ENCODE measurements at regions of chr11 and their contacts with region 1.

Region 1: DNA sequence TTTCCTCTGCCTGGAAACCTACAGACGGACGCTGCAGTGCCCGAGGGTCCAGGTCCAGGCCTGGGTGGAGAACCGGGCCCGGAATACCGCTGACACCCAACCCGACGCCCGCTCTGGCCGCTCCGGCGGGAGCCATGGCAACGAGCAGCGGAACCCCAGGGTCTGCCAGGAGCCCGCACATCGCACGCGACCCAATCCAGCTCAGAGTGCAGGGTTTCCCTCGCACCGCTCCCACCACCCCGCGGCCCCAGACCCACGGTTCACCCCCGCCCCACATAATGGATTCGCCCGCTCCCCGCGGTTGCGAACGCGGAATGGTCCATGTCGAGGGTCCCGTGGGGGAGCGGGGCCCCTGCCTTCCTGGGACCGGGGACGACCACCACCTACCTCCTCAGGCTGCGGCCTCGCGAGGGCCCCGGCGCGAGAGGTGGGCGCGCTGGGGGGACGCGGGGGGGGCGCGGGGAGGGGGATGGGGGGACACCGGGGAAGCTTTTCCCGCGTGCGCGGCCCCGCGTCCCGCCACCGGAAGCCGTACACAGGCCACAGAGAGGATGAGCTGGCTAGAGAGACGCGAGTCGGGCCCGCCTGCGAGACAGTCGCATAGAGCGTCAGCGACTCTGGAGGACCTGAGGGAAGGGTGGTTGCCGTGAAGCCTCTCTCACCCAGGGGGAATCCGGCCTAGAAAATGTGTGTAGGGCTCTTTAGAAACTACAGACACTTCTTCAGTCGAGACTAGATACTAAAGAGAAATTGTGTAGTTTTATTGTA is at the start of gene SSRP1:
- DNase-seq: peak; percentile 87
- ATAC-seq: peak; percentile 99
- H3K4me3 Mint-ChIP-seq: peak within 1 kb of the TSS; percentile 86
- H3K27ac Mint-ChIP-seq: peak within 1 kb of the TSS; percentile 97
- H3K4me1 Mint-ChIP-seq: peaks cover 32% of the 10 kb centered on the region
- H3K27me3 Mint-ChIP-seq: peaks cover 3% of the 10 kb centered on the region
- total RNA-seq, gene SSRP1: 127 to 130 TPM

Region 2: DNA sequence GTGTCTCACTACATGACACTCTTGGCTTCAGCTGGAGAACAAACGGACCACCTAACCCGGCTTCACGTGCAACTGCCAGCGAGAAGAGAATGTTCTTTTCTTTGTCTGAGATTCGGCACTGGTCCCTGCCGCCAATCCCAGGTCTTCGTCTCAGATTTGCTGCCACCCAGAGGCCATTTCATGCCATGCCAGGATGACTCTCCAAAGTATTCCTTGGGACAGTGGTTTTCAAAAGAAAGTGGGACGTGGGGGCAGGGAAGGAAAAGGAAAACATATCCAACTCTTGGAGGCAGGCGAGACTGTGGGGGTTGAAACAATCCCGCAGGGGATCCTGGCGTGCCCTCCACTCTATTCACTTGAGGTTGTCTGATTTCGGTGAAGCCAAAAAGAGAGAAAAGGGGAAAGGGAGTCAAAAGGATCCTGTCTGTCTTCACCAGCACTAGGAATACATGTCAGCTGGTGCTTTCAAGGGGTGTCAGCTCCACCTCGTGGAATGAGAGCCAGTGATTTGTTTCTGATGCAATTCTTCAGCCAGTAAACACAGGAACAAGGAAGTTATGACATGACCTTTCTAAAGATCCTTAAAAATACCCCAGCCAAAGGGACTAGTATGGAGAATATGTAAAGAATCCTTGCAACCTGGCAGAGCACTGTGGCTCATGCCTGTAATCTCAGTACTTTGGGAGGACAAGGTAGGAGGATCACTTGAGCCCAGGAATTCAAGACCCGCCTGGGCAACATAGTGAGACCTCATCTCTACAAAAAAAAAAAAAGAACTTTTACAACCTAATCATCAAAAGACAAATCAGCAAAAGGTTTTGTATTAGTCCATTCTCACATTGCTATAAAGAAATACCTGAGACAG is 57.5 kb before region 1 on chr11:
- POLR2A ChIA-PET with region 1: no interaction called
- DNase-seq: no peak
- ATAC-seq: peak; percentile 36
- H3K4me3 Mint-ChIP-seq: no peak overlapping the region
- H3K27ac Mint-ChIP-seq: no peak overlapping the region
- H3K4me1 Mint-ChIP-seq: peaks cover 7% of the 10 kb centered on the region
- H3K27me3 Mint-ChIP-seq: peaks cover 31% of the 10 kb centered on the region

Region 3: DNA sequence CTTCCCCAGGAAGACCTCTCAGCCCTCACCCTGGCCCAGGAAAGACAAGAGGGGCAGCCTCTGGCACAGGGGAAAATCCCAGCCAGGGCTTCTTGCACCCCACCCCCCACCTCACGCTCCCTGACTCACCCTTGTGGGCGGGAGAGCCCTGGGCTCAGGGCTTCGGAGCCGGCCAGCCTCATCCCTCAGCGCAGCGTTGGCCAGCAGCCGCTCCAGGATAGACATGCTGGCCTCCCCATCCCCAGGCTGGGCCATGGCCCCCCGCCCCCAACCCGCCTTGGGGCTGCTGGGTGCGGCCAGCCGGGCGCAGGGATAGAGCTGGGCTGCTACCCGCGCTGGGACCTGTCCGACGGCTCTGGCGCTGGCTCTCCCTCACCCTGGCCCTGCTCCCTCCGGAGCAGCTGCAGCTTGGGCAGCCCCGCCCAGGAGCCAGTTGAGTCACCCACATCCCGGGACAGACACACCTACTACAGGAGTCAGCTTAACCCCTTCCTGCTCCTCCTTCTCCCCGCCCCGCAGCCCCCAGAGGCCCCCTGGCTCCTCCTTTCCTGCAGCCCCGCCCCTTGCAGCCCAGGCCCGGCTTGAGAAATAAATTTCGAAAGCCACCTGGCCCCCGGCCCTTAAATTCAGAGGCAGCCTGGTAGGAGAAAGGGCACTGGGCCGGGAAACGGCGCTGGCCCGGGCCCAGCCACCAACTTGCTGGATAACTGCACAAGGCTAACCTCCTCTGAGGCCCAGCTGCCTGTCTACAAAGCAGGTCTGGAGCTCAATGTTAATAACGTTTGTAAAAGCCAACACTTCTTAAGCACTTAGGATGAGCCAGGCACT is 24.2 kb before region 1 on chr11:
- POLR2A ChIA-PET with region 1: interaction called, 11 read pairs
- DNase-seq: peak; percentile 82
- ATAC-seq: peak; percentile 97
- H3K4me3 Mint-ChIP-seq: peak overlapping the region; percentile 79
- H3K27ac Mint-ChIP-seq: peak overlapping the region; percentile 59
- H3K4me1 Mint-ChIP-seq: peaks cover 15% of the 10 kb centered on the region
- H3K27me3 Mint-ChIP-seq: no peaks in the 10 kb centered on the region

Region 4: GRCh38 chr11:57324886-57325734 is 10.4 kb before region 1 on chr11 and contains the start of gene TNKS1BP1:
- POLR2A ChIA-PET with region 1: interaction called, 80 read pairs
- DNase-seq: peak; percentile 91
- ATAC-seq: peak; percentile 93
- H3K4me3 Mint-ChIP-seq: peak within 1 kb of the TSS; percentile 85
- H3K27ac Mint-ChIP-seq: peak within 1 kb of the TSS; percentile 95
- H3K4me1 Mint-ChIP-seq: peaks cover 34% of the 10 kb centered on the region
- H3K27me3 Mint-ChIP-seq: no peaks in the 10 kb centered on the region
- total RNA-seq, gene TNKS1BP1: 15.7 to 18.0 TPM

Region 5: GRCh38 chr11:57417056-57417455 is 81.5 kb after region 1 on chr11:
- POLR2A ChIA-PET with region 1: no interaction called
- DNase-seq: no peak
- ATAC-seq: no peak
- H3K4me3 Mint-ChIP-seq: no peak overlapping the region
- H3K27ac Mint-ChIP-seq: no peak overlapping the region
- H3K4me1 Mint-ChIP-seq: peaks cover 25% of the 10 kb centered on the region
- H3K27me3 Mint-ChIP-seq: no peaks in the 10 kb centered on the region

Measured in activated naive CD8-positive, alpha-beta T cell treated with anti-CD3 and anti-CD28 coated beads, Interleukin-2, amount 10 ng/mL, durations not matched to agents 7 days and 5 days (primary cell).